ENCODE measurements at regions of chr5 and their contacts with region 1.

Region 1: GRCh38 chr5:141040771-141041426 is 10.3 kb upstream of the PCDHB1 start:
- DNase-seq: peak; percentile 93 to 98 (median 98)
- H3K4me3 ChIP-seq: peak overlapping the region; percentile 35 to 85 (median 72)
- H3K27ac ChIP-seq: peak overlapping the region; percentile 80 to 99 (median 94)
- H3K27me3 ChIP-seq: peaks cover 0 to 42% (median 6%) of the 10 kb centered on the region in 45 donors
- CTCF ChIP-seq: peak; percentile 76 to 99 (median 93)

Region 2: DNA sequence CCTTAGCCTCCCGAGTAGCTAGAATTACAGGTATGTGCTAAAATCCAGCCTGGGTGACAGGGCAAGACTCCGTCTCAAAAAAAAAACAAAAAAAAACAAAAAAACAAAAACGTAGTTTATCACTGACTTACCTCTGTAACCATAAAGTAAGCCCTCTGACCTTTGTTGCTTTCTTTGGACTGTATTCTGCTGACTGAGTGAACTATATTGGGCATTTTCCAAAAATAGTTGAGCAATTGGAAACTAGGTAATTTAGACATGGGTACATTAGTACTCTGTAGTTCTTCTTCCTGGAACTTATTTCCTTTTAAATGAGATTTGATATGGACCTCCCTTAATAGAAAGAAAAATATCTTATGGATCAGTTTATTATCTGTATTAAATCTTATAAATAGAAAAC is 572.7 kb before region 1 on chr5:
- intact Hi-C with region 1: no loop called
- DNase-seq: no peak
- H3K4me3 ChIP-seq: no peak overlapping the region
- H3K27ac ChIP-seq: no peak overlapping the region
- H3K27me3 ChIP-seq: no peaks in the 10 kb centered on the region
- CTCF ChIP-seq: no peak

Region 3: GRCh38 chr5:140821375-140822280 is 219.3 kb before region 1 on chr5 and contains the start of gene PCDHA5:
- intact Hi-C with region 1: loop called in 1 of 2 experiments (anchors 10 kb)
- DNase-seq: peak in 6 of 10 donors; percentile 37 to 76 (median 46)
- H3K4me3 ChIP-seq: peak within 1 kb of the TSS in 45 of 59 donors; percentile 6 to 56 (median 35)
- H3K27ac ChIP-seq: peak within 1 kb of the TSS in 2 of 59 donors; percentile 28 to 40
- H3K27me3 ChIP-seq: peaks cover 0 to 29% (median 0%) of the 10 kb centered on the region in 45 donors
- CTCF ChIP-seq: peak in 53 of 56 donors; percentile 21 to 66 (median 48)
- total RNA-seq, gene PCDHA5: 3.3 to 11.2 (median 6.8) TPM

Region 4: GRCh38 chr5:140855772-140856674 is 184.9 kb before region 1 on chr5 and contains the start of gene PCDHA10:
- intact Hi-C with region 1: loop called in 1 of 2 experiments (anchors 5 kb)
- DNase-seq: peak in 2 of 10 donors; percentile 22 to 45
- H3K4me3 ChIP-seq: peak within 1 kb of the TSS in 54 of 59 donors; percentile 8 to 66 (median 47)
- H3K27ac ChIP-seq: peak within 1 kb of the TSS in 5 of 59 donors; percentile 33 to 63 (median 54)
- H3K27me3 ChIP-seq: peaks cover 0 to 1% (median 0%) of the 10 kb centered on the region in 45 donors
- CTCF ChIP-seq: peak in 54 of 56 donors; percentile 10 to 71 (median 52)
- total RNA-seq, gene PCDHA10: 1.8 to 16.9 (median 9.4) TPM

Region 5: DNA sequence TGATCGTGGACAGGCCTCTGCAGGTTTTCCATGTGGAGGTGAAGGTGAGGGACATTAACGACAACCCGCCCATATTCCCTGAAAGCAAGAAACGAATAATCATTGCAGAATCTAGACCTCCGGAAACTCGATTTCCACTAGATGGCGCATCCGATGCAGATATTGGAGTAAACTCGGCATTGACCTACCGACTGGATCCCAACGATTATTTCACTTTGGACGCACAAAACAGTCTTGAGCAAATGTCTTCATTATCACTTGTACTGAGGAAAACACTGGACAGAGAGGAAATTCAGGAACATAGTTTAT is 158.4 kb before region 1 on chr5:
- intact Hi-C with region 1: loop called (anchors 1 to 5 kb)
- DNase-seq: no peak
- H3K4me3 ChIP-seq: peak overlapping the region in 55 of 59 donors; percentile 15 to 67 (median 42)
- H3K27ac ChIP-seq: no peak overlapping the region
- H3K27me3 ChIP-seq: no peaks in the 10 kb centered on the region
- CTCF ChIP-seq: peak in 40 of 56 donors; percentile 9 to 54 (median 36)

Region 6: GRCh38 chr5:140926443-140927227 is 114.3 kb before region 1 on chr5:
- intact Hi-C with region 1: loop called (anchors 1 to 2 kb)
- DNase-seq: peak; percentile 72 to 88 (median 79)
- H3K4me3 ChIP-seq: peak overlapping the region; percentile 39 to 82 (median 66)
- H3K27ac ChIP-seq: peak overlapping the region in 31 of 59 donors; percentile 1 to 70 (median 44)
- H3K27me3 ChIP-seq: peaks cover 0 to 4% (median 0%) of the 10 kb centered on the region in 45 donors
- CTCF ChIP-seq: peak; percentile 40 to 94 (median 85)

Region 7: GRCh38 chr5:140966293-140967225 is 74.3 kb before region 1 on chr5 and contains the start of gene PCDHAC2:
- intact Hi-C with region 1: loop called (anchors 2 kb)
- DNase-seq: peak; percentile 42 to 80 (median 69)
- H3K4me3 ChIP-seq: peak within 1 kb of the TSS; percentile 57 to 90 (median 76)
- H3K27ac ChIP-seq: peak within 1 kb of the TSS; percentile 46 to 97 (median 91)
- H3K27me3 ChIP-seq: no peaks in the 10 kb centered on the region
- CTCF ChIP-seq: peak in 7 of 56 donors; percentile 1 to 17 (median 5)
- total RNA-seq, gene PCDHAC2: 11.9 to 40.6 (median 25.2) TPM

Region 8: GRCh38 chr5:141681695-141682641 is 641.1 kb after region 1 on chr5 and contains the start of gene ARAP3:
- intact Hi-C with region 1: no loop called
- DNase-seq: peak in 2 of 10 donors; percentile 43 to 50
- H3K4me3 ChIP-seq: peak within 1 kb of the TSS in 58 of 59 donors; percentile 14 to 65 (median 50)
- H3K27ac ChIP-seq: peak within 1 kb of the TSS in 42 of 59 donors; percentile 14 to 82 (median 56)
- H3K27me3 ChIP-seq: no peaks in the 10 kb centered on the region
- CTCF ChIP-seq: no peak
- total RNA-seq, gene ARAP3: 3.8 to 24.9 (median 10.5) TPM

Measured in dorsolateral prefrontal cortex (tissue), 120 donors.